CD4-positive, alpha-beta T cell (primary cell): ENCODE measurements at regions of chr5 and their contacts with region 1.

Region 1: DNA sequence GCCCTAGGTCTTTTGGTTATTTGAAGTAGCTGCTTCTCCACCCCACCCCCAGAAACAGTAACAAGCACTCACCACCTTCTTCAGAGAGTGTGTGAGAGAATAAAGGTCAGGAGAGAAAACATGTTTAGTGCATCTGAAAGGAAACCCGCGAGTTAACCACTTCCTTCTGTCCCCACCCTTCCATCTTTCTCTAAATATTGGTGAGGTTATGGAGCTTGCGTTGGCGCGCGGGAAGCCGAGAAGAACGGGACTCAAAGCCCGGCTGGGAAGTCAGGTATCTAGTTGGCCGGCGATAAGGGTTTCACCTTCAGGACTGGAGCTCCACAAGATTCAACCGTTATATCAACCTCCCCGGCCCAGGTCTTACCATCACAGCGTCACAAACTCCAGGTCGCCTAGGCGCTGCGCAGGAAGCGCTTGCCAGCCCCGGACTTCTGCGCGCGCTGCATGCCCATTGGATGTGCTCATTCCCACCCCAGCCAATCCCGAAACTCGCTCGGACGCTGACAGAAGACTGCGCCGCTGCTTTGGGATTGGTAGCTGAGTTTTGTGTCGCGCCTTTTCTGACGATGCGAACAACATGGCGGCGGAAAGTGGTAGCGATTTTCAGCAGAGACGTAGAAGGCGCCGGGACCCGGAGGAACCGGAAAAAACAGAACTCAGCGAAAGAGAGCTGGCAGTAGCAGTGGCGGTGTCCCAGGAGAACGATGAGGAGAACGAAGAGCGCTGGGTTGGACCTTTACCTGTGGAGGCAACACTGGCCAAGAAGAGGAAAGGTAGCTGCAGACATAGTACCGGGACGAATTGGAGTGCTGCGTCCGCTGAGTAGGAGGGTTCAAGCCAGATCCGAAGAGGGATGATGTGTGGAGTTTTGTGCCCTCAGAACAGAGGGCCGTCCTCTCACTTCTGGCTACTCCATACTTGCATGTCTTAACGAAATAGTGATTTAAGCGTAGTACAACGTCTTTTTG is at the starts of genes CENPK and PPWD1:
- DNase-seq: peak; percentile 89 to 97 (median 93)
- ATAC-seq: peak; percentile 96
- H3K4me3 ChIP-seq: peak within 1 kb of the TSS; percentile 75
- H3K4me3 Mint-ChIP-seq: peak within 1 kb of the TSS; percentile 95
- H3K27ac ChIP-seq: peak within 1 kb of the TSS; percentile 93 to 94
- H3K27ac Mint-ChIP-seq: peak within 1 kb of the TSS; percentile 94
- H3K4me1 ChIP-seq: peaks cover 15% of the 10 kb centered on the region
- H3K4me1 Mint-ChIP-seq: peaks cover 64% of the 10 kb centered on the region
- H3K27me3 ChIP-seq: no peaks in the 10 kb centered on the region
- H3K27me3 Mint-ChIP-seq: no peaks in the 10 kb centered on the region
- CTCF ChIP-seq: no peak
- total RNA-seq, gene CENPK: 14.4 to 16.8 TPM
- total RNA-seq, gene PPWD1: 88.0 to 89.2 TPM

Region 2: GRCh38 chr5:64811050-64811640 is 751.9 kb before region 1 on chr5:
- CTCF ChIA-PET with region 1: interaction called, 3 read pairs
- POLR2A ChIA-PET with region 1: interaction called, 9 read pairs
- intact Hi-C with region 1: loop called in 1 of 2 experiments (anchors 10 kb)
- DNase-seq: peak in 4 of 14 experiments; percentile 11 to 60 (median 54)
- ATAC-seq: peak; percentile 51
- H3K4me3 ChIP-seq: no peak overlapping the region
- H3K4me3 Mint-ChIP-seq: no peak overlapping the region
- H3K27ac ChIP-seq: no peak overlapping the region
- H3K27ac Mint-ChIP-seq: no peak overlapping the region
- H3K4me1 ChIP-seq: no peaks in the 10 kb centered on the region
- H3K4me1 Mint-ChIP-seq: no peaks in the 10 kb centered on the region
- H3K27me3 ChIP-seq: no peaks in the 10 kb centered on the region
- H3K27me3 Mint-ChIP-seq: no peaks in the 10 kb centered on the region
- CTCF ChIP-seq: peak; percentile 54

Region 3: DNA sequence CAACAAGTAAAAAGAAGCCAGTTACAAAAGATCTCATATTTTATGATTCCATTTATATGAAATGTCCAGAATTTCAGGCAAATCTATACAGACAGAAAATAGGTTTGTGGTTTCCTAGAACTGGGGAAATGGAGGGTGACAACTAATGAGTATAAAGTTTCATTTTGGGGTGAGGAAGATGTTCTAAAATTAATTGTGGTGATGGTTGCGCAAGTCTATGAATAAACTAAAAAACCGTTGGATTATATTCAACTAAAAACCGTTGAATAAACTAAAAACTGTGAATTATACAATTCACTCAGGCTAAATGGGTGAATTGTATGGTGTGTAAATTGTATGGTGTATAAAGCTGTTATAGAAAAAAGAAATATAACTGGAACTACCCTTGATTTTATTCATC is 128.9 kb before region 1 on chr5:
- CTCF ChIA-PET with region 1: no interaction called
- POLR2A ChIA-PET with region 1: no interaction called
- intact Hi-C with region 1: no loop called
- DNase-seq: no peak
- ATAC-seq: no peak
- H3K4me3 ChIP-seq: no peak overlapping the region
- H3K4me3 Mint-ChIP-seq: no peak overlapping the region
- H3K27ac ChIP-seq: no peak overlapping the region
- H3K27ac Mint-ChIP-seq: no peak overlapping the region
- H3K4me1 ChIP-seq: no peaks in the 10 kb centered on the region
- H3K4me1 Mint-ChIP-seq: no peaks in the 10 kb centered on the region
- H3K27me3 ChIP-seq: peaks cover 0 to 3% of the 10 kb centered on the region in 2 experiments
- H3K27me3 Mint-ChIP-seq: no peaks in the 10 kb centered on the region
- CTCF ChIP-seq: no peak

Region 4: DNA sequence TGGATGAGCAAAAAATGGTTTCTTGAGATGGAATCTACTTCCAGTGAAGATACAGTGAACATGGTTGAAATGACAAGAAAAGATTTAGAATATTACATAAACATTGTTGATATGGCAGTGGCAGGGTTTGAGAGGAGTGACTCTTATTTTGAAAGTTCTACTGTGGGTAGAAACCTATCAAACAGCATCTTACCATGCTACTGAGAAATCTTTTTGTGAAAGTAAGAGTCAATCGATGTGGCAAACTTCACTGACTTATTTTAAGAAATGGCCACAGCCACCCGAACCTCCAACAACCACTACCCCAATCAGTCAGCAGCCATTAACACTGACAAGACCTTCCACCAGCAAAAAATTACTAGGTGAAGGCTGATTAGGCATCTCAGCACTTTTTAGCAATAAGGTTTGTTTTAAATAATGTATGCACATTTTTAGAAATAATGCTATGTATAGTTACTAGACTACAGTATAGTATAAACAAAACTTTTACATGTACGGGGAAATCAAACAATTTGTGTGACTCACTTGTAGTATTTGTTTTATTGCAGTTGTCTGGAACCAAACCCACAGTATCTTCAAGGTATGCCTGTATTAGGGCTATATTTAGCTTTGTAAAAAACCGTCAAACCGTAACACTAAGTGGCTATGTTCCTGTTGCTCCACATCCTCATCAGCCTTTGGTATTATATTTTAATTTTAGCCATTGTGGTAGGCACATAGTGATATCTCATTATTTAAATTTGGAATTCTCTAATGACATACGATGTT is 50.7 kb before region 1 on chr5:
- CTCF ChIA-PET with region 1: no interaction called
- POLR2A ChIA-PET with region 1: interaction called, 16 read pairs
- intact Hi-C with region 1: no loop called
- DNase-seq: no peak
- ATAC-seq: no peak
- H3K4me3 ChIP-seq: no peak overlapping the region
- H3K4me3 Mint-ChIP-seq: no peak overlapping the region
- H3K27ac ChIP-seq: no peak overlapping the region
- H3K27ac Mint-ChIP-seq: no peak overlapping the region
- H3K4me1 ChIP-seq: no peaks in the 10 kb centered on the region
- H3K4me1 Mint-ChIP-seq: no peaks in the 10 kb centered on the region
- H3K27me3 ChIP-seq: no peaks in the 10 kb centered on the region
- H3K27me3 Mint-ChIP-seq: no peaks in the 10 kb centered on the region
- CTCF ChIP-seq: no peak

Region 5: GRCh38 chr5:65577141-65577540 is 14.1 kb after region 1 on chr5:
- CTCF ChIA-PET with region 1: interaction called, 3 read pairs
- POLR2A ChIA-PET with region 1: interaction called, 14 read pairs
- intact Hi-C with region 1: no loop called
- DNase-seq: no peak
- ATAC-seq: no peak
- H3K4me3 ChIP-seq: no peak overlapping the region
- H3K4me3 Mint-ChIP-seq: no peak overlapping the region
- H3K27ac ChIP-seq: no peak overlapping the region
- H3K27ac Mint-ChIP-seq: no peak overlapping the region
- H3K4me1 ChIP-seq: no peaks in the 10 kb centered on the region
- H3K4me1 Mint-ChIP-seq: peaks cover 46% of the 10 kb centered on the region
- H3K27me3 ChIP-seq: no peaks in the 10 kb centered on the region
- H3K27me3 Mint-ChIP-seq: no peaks in the 10 kb centered on the region
- CTCF ChIP-seq: no peak

Region 6: DNA sequence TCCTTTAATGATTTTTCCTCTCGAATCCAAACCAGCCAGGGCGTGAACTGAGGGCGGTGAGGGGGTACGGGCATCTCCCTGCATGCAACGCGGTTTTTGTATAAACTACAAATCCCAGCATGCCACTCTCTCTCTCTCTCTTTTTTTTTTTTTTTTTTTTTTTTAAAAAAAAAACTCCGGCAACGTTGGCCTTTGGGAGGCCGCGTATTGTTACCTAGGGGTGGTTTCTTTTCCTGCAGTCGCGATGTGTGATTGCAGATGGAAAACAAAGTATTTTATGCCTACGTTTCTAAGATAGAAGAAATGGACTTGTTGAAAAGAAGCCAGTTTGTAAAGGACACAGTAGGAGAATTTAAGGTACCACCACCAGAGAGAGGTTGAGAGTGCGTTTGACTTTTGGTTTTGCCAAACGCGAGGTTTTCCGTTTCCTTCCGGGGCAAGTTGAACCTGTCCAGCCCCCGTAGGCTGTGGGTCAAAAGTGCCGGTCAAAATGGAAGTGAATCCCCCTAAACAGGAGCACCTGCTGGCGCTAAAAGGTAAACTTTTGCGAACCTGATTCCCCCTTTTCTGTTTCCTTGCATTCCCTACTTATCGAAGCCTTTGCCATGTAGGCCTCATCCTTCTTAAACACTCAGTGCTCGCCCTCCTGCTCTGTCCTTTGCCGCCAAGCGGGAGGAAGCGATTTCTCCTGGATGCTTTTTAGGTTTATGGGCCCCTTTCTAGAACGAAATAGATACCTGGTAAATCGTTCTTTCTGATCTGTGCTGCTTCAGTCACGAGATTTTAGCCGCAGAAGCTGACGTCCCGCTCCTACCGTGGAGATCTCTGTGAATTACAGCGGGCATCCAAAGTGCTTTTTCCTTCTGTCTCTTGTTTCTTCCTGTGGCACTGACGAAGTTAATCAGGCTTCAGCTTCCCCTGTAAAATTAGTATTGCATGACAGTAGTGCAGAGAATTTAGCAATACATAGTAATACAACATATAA is 61.8 kb after region 1 on chr5 and contains the starts of genes SHLD3 and TRAPPC13:
- CTCF ChIA-PET with region 1: no interaction called
- POLR2A ChIA-PET with region 1: interaction called, 72 read pairs
- intact Hi-C with region 1: loop called (anchors 1 to 2 kb)
- DNase-seq: peak; percentile 67 to 94 (median 76)
- ATAC-seq: peak; percentile 72
- H3K4me3 ChIP-seq: peak within 1 kb of the TSS; percentile 67
- H3K4me3 Mint-ChIP-seq: peak within 1 kb of the TSS; percentile 99
- H3K27ac ChIP-seq: peak within 1 kb of the TSS; percentile 85 to 87
- H3K27ac Mint-ChIP-seq: peak within 1 kb of the TSS; percentile 99
- H3K4me1 ChIP-seq: peaks cover 29% of the 10 kb centered on the region
- H3K4me1 Mint-ChIP-seq: peaks cover 63% of the 10 kb centered on the region
- H3K27me3 ChIP-seq: no peaks in the 10 kb centered on the region
- H3K27me3 Mint-ChIP-seq: no peaks in the 10 kb centered on the region
- CTCF ChIP-seq: peak; percentile 29
- total RNA-seq, gene SHLD3: 11.5 to 11.7 TPM
- total RNA-seq, gene TRAPPC13: 11.2 to 14.4 TPM

Region 7: DNA sequence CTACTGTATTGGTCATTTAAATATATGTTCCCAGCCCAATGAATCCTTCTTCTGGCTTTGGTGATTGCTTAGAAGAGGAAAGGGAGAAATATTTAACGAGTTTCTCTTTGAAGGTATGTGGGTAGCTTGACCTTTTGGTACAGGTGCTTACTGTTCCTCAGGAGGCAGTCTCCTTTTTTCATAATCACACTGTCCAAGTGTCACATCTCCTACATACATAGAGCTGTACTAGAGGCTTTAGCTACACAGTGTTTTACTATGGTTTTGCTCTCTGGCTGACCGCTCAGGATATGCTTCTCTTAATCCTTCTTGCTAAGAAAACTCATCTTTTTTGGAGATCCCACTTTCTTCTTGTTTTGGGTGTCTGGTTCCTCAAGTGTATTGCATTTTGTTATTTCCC is 370.3 kb after region 1 on chr5:
- CTCF ChIA-PET with region 1: no interaction called
- POLR2A ChIA-PET with region 1: no interaction called
- intact Hi-C with region 1: no loop called
- DNase-seq: no peak
- ATAC-seq: no peak
- H3K4me3 ChIP-seq: no peak overlapping the region
- H3K4me3 Mint-ChIP-seq: peak overlapping the region; percentile 57
- H3K27ac ChIP-seq: no peak overlapping the region
- H3K27ac Mint-ChIP-seq: peak overlapping the region; percentile 74
- H3K4me1 ChIP-seq: peaks cover 28% of the 10 kb centered on the region
- H3K4me1 Mint-ChIP-seq: peaks cover 87% of the 10 kb centered on the region
- H3K27me3 ChIP-seq: no peaks in the 10 kb centered on the region
- H3K27me3 Mint-ChIP-seq: no peaks in the 10 kb centered on the region
- CTCF ChIP-seq: no peak

Region 8: GRCh38 chr5:66144074-66144833 is 581.2 kb after region 1 on chr5 and contains the start of gene SREK1:
- CTCF ChIA-PET with region 1: no interaction called
- POLR2A ChIA-PET with region 1: interaction called, 25 read pairs
- intact Hi-C with region 1: loop called in 1 of 2 experiments (anchors 5 kb)
- DNase-seq: peak; percentile 76 to 94 (median 84)
- ATAC-seq: peak; percentile 84
- H3K4me3 ChIP-seq: peak within 1 kb of the TSS; percentile 94
- H3K4me3 Mint-ChIP-seq: peak within 1 kb of the TSS; percentile 100
- H3K27ac ChIP-seq: peak within 1 kb of the TSS; percentile 97 to 100
- H3K27ac Mint-ChIP-seq: peak within 1 kb of the TSS; percentile 100
- H3K4me1 ChIP-seq: peaks cover 10% of the 10 kb centered on the region
- H3K4me1 Mint-ChIP-seq: peaks cover 49% of the 10 kb centered on the region
- H3K27me3 ChIP-seq: no peaks in the 10 kb centered on the region
- H3K27me3 Mint-ChIP-seq: no peaks in the 10 kb centered on the region
- CTCF ChIP-seq: no peak
- total RNA-seq, gene SREK1: 137 to 155 TPM